ENCODE measurements at regions of chr2 and their contacts with region 1.

Region 1: GRCh38 chr2:139544186-139544851 is 764.1 kb upstream of the NXPH2 start:
- DNase-seq: no peak
- ATAC-seq: no peak
- H3K4me3 ChIP-seq: no peak overlapping the region
- H3K27ac ChIP-seq: no peak overlapping the region
- H3K4me1 ChIP-seq: no peaks in the 10 kb centered on the region
- H3K27me3 ChIP-seq: no peaks in the 10 kb centered on the region
- CTCF ChIP-seq: no peak
- EP300 ChIP-seq: no peak
- POLR2A ChIP-seq: no peak
- RAD21 ChIP-seq: no peak

Region 2: DNA sequence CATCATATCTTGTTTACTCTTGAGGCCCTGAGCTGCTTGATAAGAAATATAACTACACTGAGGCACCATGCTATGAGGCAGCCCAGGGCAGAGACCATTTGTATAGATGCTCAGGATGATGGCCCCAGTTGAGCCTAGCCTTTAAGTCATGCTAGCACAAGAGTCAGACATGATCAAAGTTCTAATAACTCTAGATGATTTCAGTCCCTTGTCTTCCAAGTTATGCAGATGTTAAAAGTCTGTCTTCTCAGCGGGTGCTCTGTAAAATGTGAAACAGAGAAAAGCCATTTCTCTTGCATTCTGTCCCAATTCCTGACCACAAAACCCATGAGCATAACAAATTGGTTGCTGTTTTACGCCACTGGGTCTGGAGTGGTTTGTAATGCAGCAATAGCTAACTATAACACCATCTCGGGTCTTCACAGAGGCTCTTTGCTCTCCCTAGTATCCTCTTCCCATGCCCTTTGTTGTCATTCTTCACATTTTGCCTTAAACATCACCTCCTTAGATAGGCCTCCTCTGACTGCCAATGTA is 813.8 kb before region 1 on chr2:
- CTCF ChIA-PET with region 1: no interaction called
- POLR2A ChIA-PET with region 1: no interaction called
- RAD21 ChIA-PET with region 1: no interaction called
- SMC1A ChIA-PET with region 1: no interaction called
- in situ Hi-C with region 1: no loop called
- intact Hi-C with region 1: no loop called
- DNase-seq: no peak
- ATAC-seq: no peak
- H3K4me3 ChIP-seq: no peak overlapping the region
- H3K27ac ChIP-seq: no peak overlapping the region
- H3K4me1 ChIP-seq: no peaks in the 10 kb centered on the region
- H3K27me3 ChIP-seq: no peaks in the 10 kb centered on the region
- CTCF ChIP-seq: no peak
- EP300 ChIP-seq: no peak
- POLR2A ChIP-seq: no peak
- RAD21 ChIP-seq: no peak

Region 3: GRCh38 chr2:139529080-139529479 is 15.2 kb before region 1 on chr2:
- CTCF ChIA-PET with region 1: no interaction called
- POLR2A ChIA-PET with region 1: no interaction called
- RAD21 ChIA-PET with region 1: no interaction called
- SMC1A ChIA-PET with region 1: interaction called, 3 read pairs
- in situ Hi-C with region 1: no loop called
- intact Hi-C with region 1: loop called (anchors 1 kb)
- DNase-seq: no peak
- ATAC-seq: no peak
- H3K4me3 ChIP-seq: no peak overlapping the region
- H3K27ac ChIP-seq: no peak overlapping the region
- H3K4me1 ChIP-seq: no peaks in the 10 kb centered on the region
- H3K27me3 ChIP-seq: no peaks in the 10 kb centered on the region
- CTCF ChIP-seq: no peak
- EP300 ChIP-seq: no peak
- POLR2A ChIP-seq: no peak
- RAD21 ChIP-seq: no peak

Measured in GM12878 (cell line).